WTC11 (cell line): ENCODE measurements at regions of chr17 and their contacts with region 1.

Region 1: DNA sequence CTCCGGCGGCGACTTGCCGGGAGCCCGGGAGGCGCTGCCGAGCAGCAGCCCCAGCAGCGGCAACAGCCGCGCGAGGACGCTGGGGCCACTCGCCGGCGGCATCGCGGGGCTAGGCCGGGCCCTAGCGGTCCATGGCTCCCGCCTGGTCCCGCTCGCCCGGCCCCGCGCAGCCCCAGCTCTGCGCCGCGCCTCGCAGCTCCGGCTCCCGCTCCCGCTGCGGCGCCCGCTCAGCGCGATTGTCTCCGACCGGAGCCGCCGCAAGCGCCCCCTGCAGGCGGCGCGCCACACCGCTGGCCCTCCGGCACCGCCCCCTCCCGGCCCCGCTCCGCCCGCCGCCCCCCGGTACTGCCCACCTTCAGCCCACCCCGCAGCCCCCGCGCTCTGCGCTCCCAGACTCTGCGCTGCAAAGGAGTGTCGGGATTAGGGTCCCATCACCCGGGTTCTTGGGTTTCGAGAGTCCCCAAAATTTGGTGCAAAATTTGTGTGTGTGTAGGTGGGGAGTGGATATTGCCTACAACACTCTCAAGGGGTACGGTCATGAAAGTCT is at the start of gene FAM171A2:
- DNase-seq: peak; percentile 79
- ATAC-seq: peak; percentile 76
- H3K4me3 Mint-ChIP-seq: peak within 1 kb of the TSS; percentile 74
- H3K27ac Mint-ChIP-seq: no peak within 1 kb of the TSS
- H3K4me1 Mint-ChIP-seq: peaks cover 22% of the 10 kb centered on the region
- H3K27me3 Mint-ChIP-seq: peaks cover 42% of the 10 kb centered on the region
- CTCF ChIP-seq: peak; percentile 79
- total RNA-seq, gene FAM171A2: 28.2 to 29.9 TPM (median 28.5 TPM) in 3 replicates

Region 2: DNA sequence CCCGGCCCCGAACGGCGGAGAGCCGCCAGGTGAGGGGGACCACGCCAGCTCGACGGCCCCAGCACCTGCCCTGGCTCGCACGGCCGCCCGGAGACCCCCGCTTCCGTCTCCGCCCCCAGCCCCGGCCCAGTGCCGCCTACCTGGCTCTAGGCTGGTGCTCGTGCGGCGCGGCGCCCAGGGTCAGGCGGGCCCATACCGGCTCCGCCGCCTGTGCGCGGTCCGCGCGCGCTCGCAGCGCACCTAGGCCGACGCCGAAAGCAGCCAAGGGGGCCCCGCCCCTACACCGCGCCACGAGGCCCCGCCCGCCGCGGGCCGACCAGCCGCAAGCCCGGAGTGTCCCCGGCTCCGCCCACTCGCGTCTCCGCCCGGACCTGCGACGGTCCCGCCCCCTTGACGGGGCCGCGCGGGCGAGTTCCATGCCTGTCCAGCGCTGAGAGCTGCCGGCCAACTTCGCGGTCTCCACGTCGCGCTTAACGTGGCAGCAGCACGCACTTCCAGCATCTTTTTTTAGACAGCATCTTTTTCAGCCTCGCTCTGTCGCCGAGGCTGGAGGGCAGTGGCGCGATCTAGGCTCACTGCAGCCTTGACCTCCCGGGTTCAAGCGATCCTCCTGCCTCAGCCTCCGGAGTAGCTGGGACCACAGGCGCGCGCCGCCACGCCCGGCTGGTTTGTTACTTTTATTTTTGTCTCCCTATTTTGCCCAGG is 39.0 kb before region 1 on chr17 and contains the start of gene SLC25A39:
- CTCF ChIA-PET with region 1: interaction called, 12 read pairs
- POLR2A ChIA-PET with region 1: no interaction called
- DNase-seq: peak; percentile 94
- ATAC-seq: peak; percentile 71
- H3K4me3 Mint-ChIP-seq: peak within 1 kb of the TSS; percentile 86
- H3K27ac Mint-ChIP-seq: peak within 1 kb of the TSS; percentile 76
- H3K4me1 Mint-ChIP-seq: peaks cover 13% of the 10 kb centered on the region
- H3K27me3 Mint-ChIP-seq: peaks cover 8% of the 10 kb centered on the region
- CTCF ChIP-seq: no peak
- total RNA-seq, gene SLC25A39: 254 to 271 TPM (median 268 TPM) in 3 replicates

Region 3: DNA sequence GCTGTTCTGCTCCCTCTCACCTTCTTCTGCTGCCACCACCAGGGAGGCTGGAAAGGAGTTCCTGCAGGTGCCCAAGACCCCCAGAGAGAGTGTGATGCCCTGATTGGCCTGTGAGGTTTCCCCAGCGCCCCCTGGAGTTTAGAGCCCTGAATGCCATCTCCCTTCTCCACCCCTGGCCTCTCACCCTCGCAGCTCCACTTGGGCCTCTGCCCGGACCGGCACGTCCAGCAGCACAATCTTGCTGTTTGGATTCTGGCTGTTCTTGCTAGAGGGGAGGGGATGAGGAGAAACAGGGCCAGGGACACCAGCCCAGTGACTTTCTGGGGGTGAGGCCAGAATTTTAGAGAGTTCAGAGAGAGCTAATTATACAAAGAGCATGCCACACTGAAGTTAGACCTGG is 12.4 kb after region 1 on chr17:
- CTCF ChIA-PET with region 1: interaction called, 128 read pairs
- POLR2A ChIA-PET with region 1: interaction called, 3 read pairs
- DNase-seq: peak; percentile 74
- ATAC-seq: peak; percentile 46
- H3K4me3 Mint-ChIP-seq: 0 out of 2 replicates have a peak overlapping the region, but pooled peaks have one; percentile 18
- H3K27ac Mint-ChIP-seq: no peak overlapping the region
- H3K4me1 Mint-ChIP-seq: peaks cover 27% of the 10 kb centered on the region
- H3K27me3 Mint-ChIP-seq: peaks cover 5% of the 10 kb centered on the region; the same call in 1 of the 2 replicates
- CTCF ChIP-seq: peak; percentile 55

Region 4: GRCh38 chr17:44385287-44386181 is 21.8 kb after region 1 on chr17:
- CTCF ChIA-PET with region 1: interaction called, 43 read pairs
- POLR2A ChIA-PET with region 1: no interaction called
- DNase-seq: peak; percentile 96
- ATAC-seq: peak; percentile 90
- H3K4me3 Mint-ChIP-seq: peak overlapping the region; percentile 80
- H3K27ac Mint-ChIP-seq: no peak overlapping the region
- H3K4me1 Mint-ChIP-seq: peaks cover 19% of the 10 kb centered on the region
- H3K27me3 Mint-ChIP-seq: peaks cover 59% of the 10 kb centered on the region
- CTCF ChIP-seq: no peak

Region 5: DNA sequence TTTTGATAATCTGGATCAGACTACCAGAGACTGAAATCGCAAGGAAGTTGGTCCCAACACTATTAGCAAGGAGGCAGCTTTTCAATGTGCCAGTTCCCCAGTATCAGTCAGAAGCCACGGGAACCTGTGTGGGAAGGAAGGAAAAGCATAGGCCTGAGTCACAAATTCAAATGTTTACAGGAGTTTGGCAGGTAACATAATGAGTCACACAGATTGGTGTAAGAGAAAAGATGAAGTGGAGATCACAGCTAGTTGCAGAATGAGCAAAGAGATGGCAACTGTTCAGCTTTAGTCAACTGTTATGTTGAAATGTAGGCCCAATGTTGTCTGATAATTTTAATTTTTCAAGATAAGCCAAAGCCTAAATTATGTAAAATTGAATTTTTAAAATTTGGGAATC is 53.9 kb after region 1 on chr17:
- CTCF ChIA-PET with region 1: no interaction called
- POLR2A ChIA-PET with region 1: no interaction called
- DNase-seq: no peak
- ATAC-seq: no peak
- H3K4me3 Mint-ChIP-seq: no peak overlapping the region
- H3K27ac Mint-ChIP-seq: no peak overlapping the region; the same call in 1 of the 2 replicates
- H3K4me1 Mint-ChIP-seq: no peaks in the 10 kb centered on the region
- H3K27me3 Mint-ChIP-seq: no peaks in the 10 kb centered on the region
- CTCF ChIP-seq: no peak